ENCODE measurements at regions of chr1 and their contacts with region 1.

Region 1: DNA sequence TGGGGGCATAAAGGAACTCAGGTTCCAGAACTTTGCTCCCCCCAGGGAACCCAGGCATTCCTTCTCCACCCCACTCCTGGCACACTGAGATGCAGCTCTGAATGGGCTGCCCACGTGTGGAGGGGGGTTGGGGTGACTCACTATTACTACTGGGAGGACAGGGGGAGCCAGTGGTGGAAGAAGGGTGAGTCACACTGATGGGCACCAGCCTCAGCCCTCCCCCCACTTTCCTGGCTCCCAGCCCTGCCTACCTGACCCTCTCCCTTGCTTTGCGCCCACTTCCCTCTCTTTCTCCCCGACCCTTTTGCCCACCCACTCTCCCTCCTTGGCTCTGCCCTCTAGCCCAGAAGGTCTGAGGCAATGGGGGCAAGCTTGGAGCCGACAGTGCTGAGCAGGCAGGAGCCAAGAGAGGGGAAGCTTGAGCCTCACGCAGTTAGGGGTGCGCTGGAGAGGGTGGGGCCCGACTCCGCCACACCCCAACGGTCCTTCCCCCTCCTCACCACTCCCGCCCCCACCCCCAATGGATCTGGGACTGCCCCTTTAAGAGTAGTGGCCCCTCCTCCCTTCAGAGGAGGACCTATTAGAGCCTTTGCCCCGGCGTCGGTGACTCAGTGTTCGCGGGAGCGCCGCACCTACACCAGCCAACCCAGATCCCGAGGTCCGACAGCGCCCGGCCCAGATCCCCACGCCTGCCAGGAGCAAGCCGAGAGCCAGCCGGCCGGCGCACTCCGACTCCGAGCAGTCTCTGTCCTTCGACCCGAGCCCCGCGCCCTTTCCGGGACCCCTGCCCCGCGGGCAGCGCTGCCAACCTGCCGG is at the start of gene LMNA:
- DNase-seq: peak; percentile 92
- H3K4me3 ChIP-seq: peak within 1 kb of the TSS; percentile 40 to 97 (median 78)
- H3K27ac ChIP-seq: peak within 1 kb of the TSS; percentile 73
- H3K4me1 ChIP-seq: peaks cover 24% of the 10 kb centered on the region
- H3K27me3 ChIP-seq: no peaks in the 10 kb centered on the region
- CTCF ChIP-seq: no peak
- POLR2A ChIP-seq: peak; percentile 98
- total RNA-seq, gene LMNA: 715 and 742 TPM in 2 replicates

Region 2: GRCh38 chr1:155759966-155760630 is 354.2 kb before region 1 on chr1:
- CTCF ChIA-PET with region 1: no interaction called
- POLR2A ChIA-PET with region 1: no interaction called
- dilution Hi-C with region 1: no loop called
- intact Hi-C with region 1: no loop called
- DNase-seq: no peak
- H3K4me3 ChIP-seq: no peak overlapping the region
- H3K27ac ChIP-seq: no peak overlapping the region
- H3K4me1 ChIP-seq: peaks cover 11% of the 10 kb centered on the region
- H3K27me3 ChIP-seq: no peaks in the 10 kb centered on the region
- CTCF ChIP-seq: no peak
- POLR2A ChIP-seq: no peak

Region 3: GRCh38 chr1:156050416-156050815 is 63.9 kb before region 1 on chr1:
- CTCF ChIA-PET with region 1: no interaction called
- POLR2A ChIA-PET with region 1: no interaction called
- dilution Hi-C with region 1: no loop called
- intact Hi-C with region 1: no loop called
- DNase-seq: no peak
- H3K4me3 ChIP-seq: no peak overlapping the region
- H3K27ac ChIP-seq: no peak overlapping the region
- H3K4me1 ChIP-seq: peaks cover 20% of the 10 kb centered on the region
- H3K27me3 ChIP-seq: no peaks in the 10 kb centered on the region
- CTCF ChIP-seq: no peak
- POLR2A ChIP-seq: no peak

Region 4: GRCh38 chr1:156104065-156104810 is 10.1 kb before region 1 on chr1:
- CTCF ChIA-PET with region 1: interaction called, 283 read pairs
- POLR2A ChIA-PET with region 1: interaction called, 17 read pairs
- dilution Hi-C with region 1: no loop called
- intact Hi-C with region 1: loop called (anchors 1 kb)
- DNase-seq: peak; percentile 91
- H3K4me3 ChIP-seq: no peak overlapping the region
- H3K27ac ChIP-seq: peak overlapping the region; percentile 97
- H3K4me1 ChIP-seq: peaks cover 57% of the 10 kb centered on the region
- H3K27me3 ChIP-seq: no peaks in the 10 kb centered on the region
- CTCF ChIP-seq: no peak
- POLR2A ChIP-seq: no peak

Region 5: GRCh38 chr1:156177919-156178654 is 63.8 kb after region 1 on chr1:
- CTCF ChIA-PET with region 1: no interaction called
- POLR2A ChIA-PET with region 1: no interaction called
- dilution Hi-C with region 1: no loop called
- intact Hi-C with region 1: no loop called
- DNase-seq: no peak
- H3K4me3 ChIP-seq: no peak overlapping the region
- H3K27ac ChIP-seq: no peak overlapping the region
- H3K4me1 ChIP-seq: no peaks in the 10 kb centered on the region
- H3K27me3 ChIP-seq: peaks cover 2 to 4% of the 10 kb centered on the region in 2 experiments
- CTCF ChIP-seq: no peak
- POLR2A ChIP-seq: no peak